ENCODE measurements at regions of chr17 and their contacts with region 1.

Region 1: DNA sequence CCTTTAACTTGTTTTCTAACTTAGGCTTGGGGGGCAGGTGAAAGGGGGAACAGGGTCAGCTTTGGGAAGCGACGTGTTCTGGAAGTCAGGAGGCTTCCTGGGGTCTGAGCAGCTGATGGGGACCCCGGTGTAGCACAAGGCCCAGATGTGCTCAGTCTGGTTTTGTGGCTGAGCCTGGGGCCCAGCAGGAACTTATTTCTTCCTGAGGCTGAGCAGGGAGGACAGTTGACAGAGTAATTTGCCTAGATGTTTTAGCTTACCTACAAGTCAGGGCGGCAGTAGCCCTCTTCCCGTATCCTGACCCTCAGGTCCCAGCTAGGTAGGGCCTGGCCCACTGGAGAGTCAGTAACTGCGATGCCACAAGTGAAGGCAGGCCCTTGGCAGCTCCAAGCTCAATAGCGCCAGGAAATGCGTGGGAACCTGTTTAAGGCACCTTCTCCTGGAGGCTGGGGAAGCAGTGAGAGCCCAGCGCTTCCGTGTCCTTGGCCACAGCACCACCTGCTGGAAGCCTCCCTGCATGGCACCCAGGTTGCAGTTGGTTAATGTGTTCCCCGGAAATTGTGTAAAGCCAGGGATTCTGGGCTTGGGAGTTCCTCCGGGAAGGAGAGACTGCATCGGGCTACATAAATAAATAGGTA is 5.2 kb downstream of the CCR7 start:
- DNase-seq: peak; percentile 93
- ATAC-seq: peak; percentile 83
- H3K4me3 Mint-ChIP-seq: no peak overlapping the region
- H3K27ac Mint-ChIP-seq: no peak overlapping the region
- H3K4me1 Mint-ChIP-seq: peaks cover 42% of the 10 kb centered on the region
- H3K27me3 Mint-ChIP-seq: peaks cover 5% of the 10 kb centered on the region
- CTCF ChIP-seq: peak; percentile 96

Region 2: GRCh38 chr17:40417609-40418427 is 142.3 kb before region 1 on chr17 and contains the start of gene TOP2A:
- CTCF ChIA-PET with region 1: interaction called, 18 read pairs
- POLR2A ChIA-PET with region 1: no interaction called
- DNase-seq: peak; percentile 97
- ATAC-seq: peak; percentile 95
- H3K4me3 Mint-ChIP-seq: peak within 1 kb of the TSS; percentile 97
- H3K27ac Mint-ChIP-seq: peak within 1 kb of the TSS; percentile 84
- H3K4me1 Mint-ChIP-seq: peaks cover 49% of the 10 kb centered on the region
- H3K27me3 Mint-ChIP-seq: no peaks in the 10 kb centered on the region; the same call in 1 of the 2 replicates
- CTCF ChIP-seq: no peak
- total RNA-seq, gene TOP2A: 273 to 307 TPM (median 292 TPM) in 3 replicates

Region 3: GRCh38 chr17:40464392-40464855 is 95.6 kb before region 1 on chr17:
- CTCF ChIA-PET with region 1: interaction called, 11 read pairs
- POLR2A ChIA-PET with region 1: no interaction called
- DNase-seq: no peak
- ATAC-seq: peak; percentile 8
- H3K4me3 Mint-ChIP-seq: no peak overlapping the region
- H3K27ac Mint-ChIP-seq: peak overlapping the region; percentile 57
- H3K4me1 Mint-ChIP-seq: peaks cover 59% of the 10 kb centered on the region
- H3K27me3 Mint-ChIP-seq: peaks cover 3% of the 10 kb centered on the region
- CTCF ChIP-seq: no peak

Region 4: GRCh38 chr17:40490289-40490853 is 69.7 kb before region 1 on chr17:
- CTCF ChIA-PET with region 1: interaction called, 14 read pairs
- POLR2A ChIA-PET with region 1: no interaction called
- DNase-seq: peak; percentile 46
- ATAC-seq: peak; percentile 77
- H3K4me3 Mint-ChIP-seq: peak overlapping the region; percentile 30; the same call in 1 of the 2 replicates
- H3K27ac Mint-ChIP-seq: peak overlapping the region; percentile 87
- H3K4me1 Mint-ChIP-seq: peaks cover 66% of the 10 kb centered on the region
- H3K27me3 Mint-ChIP-seq: peaks cover 2% of the 10 kb centered on the region; the same call in 1 of the 2 replicates
- CTCF ChIP-seq: no peak

Region 5: DNA sequence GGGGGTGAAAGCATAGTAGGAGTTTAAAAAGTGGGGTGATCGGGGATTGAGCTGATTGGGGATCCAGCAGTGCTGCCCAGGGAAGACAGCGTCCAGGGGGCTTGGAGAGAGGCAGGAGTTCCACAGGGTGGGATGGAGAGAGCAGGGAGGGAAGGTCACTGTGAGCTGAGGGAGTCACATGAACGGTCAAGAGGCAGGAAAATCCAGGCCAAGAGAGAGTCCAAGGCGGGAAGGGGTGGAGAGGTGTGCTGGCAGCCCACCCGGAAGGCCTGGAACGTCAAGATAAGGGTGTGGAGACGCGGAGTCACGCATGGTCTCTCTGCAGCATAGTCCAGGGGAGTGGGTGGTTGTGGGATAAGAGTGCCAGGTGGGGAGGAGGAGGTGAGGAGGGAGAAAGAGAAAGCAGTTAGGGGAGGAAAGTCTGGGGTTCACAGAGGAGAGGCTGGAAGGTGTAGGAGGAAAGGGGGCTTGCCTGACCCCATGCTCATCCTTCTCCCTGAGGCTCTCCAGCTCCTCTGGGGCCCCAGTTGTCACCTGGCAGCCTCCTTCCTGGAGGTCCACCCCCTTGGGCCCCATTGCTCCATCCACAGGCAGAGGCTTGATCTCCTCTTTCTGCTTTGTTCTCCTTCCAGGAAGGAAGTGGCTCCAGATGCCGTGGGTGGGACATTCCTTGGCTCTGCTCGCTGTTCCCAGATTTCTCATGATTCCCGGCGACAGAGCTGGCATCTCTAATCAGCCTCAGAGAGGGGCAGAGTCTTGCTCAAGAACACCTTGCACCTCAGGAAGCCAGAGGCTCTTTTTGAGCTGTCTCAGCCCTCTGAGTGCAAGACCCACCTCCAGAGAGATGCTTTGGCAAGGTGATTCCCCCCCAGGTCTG is 23.5 kb before region 1 on chr17:
- CTCF ChIA-PET with region 1: interaction called, 127 read pairs
- POLR2A ChIA-PET with region 1: no interaction called
- DNase-seq: no peak
- ATAC-seq: no peak
- H3K4me3 Mint-ChIP-seq: no peak overlapping the region
- H3K27ac Mint-ChIP-seq: no peak overlapping the region
- H3K4me1 Mint-ChIP-seq: peaks cover 14% of the 10 kb centered on the region
- H3K27me3 Mint-ChIP-seq: no peaks in the 10 kb centered on the region; the same call in 1 of the 2 replicates
- CTCF ChIP-seq: no peak

Region 6: DNA sequence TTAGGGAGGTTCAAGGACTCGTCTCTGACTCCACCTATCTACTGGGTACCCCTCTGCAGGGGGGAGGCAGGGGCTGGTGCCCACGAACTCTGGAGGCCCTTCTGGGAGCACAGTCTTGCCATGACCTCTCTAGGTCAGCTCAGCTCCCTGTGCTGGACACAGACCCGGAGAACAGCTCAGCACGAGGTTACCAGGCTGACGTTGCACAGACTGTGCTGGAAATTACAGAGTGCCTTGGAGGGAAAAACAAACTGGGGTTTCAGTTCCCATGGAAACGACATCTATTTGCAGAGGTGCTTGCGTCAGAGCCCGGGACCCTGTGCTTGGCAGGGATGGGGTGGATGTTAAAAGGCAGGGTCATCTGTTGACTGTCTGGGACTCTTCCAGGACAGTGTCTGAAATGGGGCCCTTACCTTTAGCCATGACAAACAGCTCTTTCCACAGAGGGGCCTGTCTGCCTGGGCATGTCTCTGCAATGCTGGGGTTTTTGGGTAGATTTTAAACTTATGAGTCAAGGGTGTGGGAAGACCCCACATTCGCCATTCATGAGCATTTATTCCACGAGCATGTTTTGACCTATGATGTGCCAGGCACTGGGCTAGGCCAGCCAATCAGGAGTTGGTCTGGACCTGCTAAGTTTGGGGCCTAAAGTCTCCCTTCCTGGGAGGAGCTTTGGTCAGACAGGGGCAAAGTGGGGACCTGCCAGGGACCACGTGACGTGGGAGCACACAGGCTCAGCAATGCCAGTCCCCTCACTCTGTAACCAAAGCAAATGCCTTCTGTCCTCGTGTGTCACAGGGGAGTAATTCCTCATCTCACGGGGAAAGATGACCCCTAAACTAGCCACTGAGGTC is 17.3 kb before region 1 on chr17:
- CTCF ChIA-PET with region 1: interaction called, 127 read pairs
- POLR2A ChIA-PET with region 1: no interaction called
- DNase-seq: peak; percentile 7
- ATAC-seq: no peak
- H3K4me3 Mint-ChIP-seq: no peak overlapping the region
- H3K27ac Mint-ChIP-seq: peak overlapping the region; percentile 11; the same call in 1 of the 2 replicates
- H3K4me1 Mint-ChIP-seq: peaks cover 23% of the 10 kb centered on the region
- H3K27me3 Mint-ChIP-seq: no peaks in the 10 kb centered on the region; the same call in 1 of the 2 replicates
- CTCF ChIP-seq: no peak